ENCODE measurements at regions of chr1 and their contacts with region 1.

Region 1: DNA sequence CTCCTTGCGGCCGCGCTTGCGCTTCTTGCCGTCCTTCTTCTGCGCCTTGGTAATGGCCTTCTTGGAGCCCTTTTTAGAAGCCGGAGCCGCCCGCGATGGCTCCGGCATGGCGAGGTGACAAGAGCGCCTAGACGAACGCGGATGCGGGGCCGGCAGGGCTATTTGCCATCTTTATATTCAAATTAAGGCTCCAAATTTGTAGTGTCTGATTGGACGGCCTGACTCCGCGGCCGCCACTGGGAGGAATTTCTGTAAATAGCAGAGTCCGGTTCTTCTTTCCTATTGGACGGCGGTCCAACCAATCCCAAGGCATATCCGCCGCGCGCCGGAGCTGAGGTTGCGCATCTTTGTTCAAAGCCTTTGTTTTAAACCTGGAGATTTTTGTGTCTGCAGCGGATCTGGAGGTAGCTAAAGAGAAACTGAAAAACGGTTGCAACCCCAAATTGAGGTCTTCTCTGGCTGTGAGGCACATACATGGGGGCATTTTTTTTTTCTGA is 22.6 kb upstream of the RNF187 start:
- DNase-seq: peak; percentile 96
- ATAC-seq: peak; percentile 83
- H3K4me3 Mint-ChIP-seq: peak overlapping the region; percentile 89
- H3K27ac Mint-ChIP-seq: peak overlapping the region; percentile 91
- H3K4me1 Mint-ChIP-seq: peaks cover 37% of the 10 kb centered on the region
- H3K27me3 Mint-ChIP-seq: peaks cover 7% of the 10 kb centered on the region
- CTCF ChIP-seq: no peak

Region 2: DNA sequence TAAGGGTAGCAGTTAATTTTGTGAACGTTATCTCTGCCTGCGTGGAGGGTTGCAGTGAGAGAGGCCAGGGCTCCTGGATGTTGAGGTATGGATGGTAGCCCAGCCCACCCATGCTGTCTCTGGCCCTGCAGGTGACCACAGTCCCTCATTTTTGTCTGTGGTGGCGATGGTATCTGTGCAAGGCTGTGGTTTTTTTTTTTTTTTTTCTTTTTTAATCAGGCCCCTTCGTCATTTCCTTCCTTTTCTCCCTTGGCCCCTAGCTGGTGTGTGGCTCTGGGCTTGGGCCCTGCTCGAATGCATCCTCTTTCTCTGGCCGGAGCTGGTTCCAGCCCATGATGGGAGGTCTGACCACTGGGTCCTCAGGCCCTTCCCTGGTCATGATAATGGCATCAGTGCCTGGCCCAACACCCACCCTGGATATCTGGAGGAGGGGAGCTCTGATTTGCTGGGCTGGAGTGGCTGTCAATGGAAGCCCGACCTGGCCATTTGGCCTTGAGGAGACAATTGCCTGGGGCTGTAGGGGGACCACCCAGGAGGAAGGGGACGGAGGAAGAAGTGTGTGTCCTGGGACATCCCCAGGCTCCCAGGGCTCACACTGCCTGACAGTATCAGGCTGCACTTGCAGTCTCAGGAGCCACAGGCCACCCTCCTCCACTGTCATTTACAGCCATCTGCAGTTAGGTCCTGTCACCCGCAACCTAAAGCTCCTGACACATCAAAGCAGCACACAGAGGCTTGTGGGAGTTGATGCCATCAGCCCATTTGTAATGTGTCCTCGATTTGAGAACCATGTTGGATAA is 14.6 kb after region 1 on chr1:
- CTCF ChIA-PET with region 1: interaction called, 31 read pairs
- POLR2A ChIA-PET with region 1: interaction called, 21 read pairs
- intact Hi-C with region 1: no loop called
- DNase-seq: peak; percentile 51
- ATAC-seq: peak; percentile 77
- H3K4me3 Mint-ChIP-seq: peak overlapping the region; percentile 19
- H3K27ac Mint-ChIP-seq: peak overlapping the region; percentile 83
- H3K4me1 Mint-ChIP-seq: peaks cover 32% of the 10 kb centered on the region
- H3K27me3 Mint-ChIP-seq: no peaks in the 10 kb centered on the region
- CTCF ChIP-seq: no peak

Region 3: DNA sequence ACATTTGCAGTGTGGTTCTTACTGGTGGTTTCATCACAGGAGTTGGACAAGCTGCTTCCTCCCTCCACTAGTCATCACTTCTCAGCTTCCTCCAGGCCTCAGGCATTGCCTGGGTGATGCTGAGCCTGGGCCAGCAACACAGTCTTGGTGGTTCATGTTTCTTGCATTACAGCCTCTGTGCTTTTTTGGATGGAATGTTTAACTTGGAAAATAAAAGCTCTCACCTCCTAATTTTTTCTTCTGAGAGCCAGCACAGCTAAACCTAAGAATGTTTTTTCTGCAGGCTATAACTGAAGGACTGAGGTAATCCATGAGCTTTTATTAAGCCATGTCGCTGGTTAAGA is 204.7 kb after region 1 on chr1:
- CTCF ChIA-PET with region 1: no interaction called
- POLR2A ChIA-PET with region 1: no interaction called
- intact Hi-C with region 1: no loop called
- DNase-seq: no peak
- ATAC-seq: no peak
- H3K4me3 Mint-ChIP-seq: no peak overlapping the region
- H3K27ac Mint-ChIP-seq: no peak overlapping the region
- H3K4me1 Mint-ChIP-seq: no peaks in the 10 kb centered on the region
- H3K27me3 Mint-ChIP-seq: no peaks in the 10 kb centered on the region
- CTCF ChIP-seq: no peak